Caco-2 (cell line): ENCODE measurements at regions of chr7 and their contacts with region 1.

Region 1: GRCh38 chr7:43764807-43765491 is 6.5 kb downstream of the BLVRA start:
- DNase-seq: peak in 1 of 2 experiments; percentile 68
- H3K4me3 ChIP-seq: no peak overlapping the region
- H3K4me3 Mint-ChIP-seq: peak overlapping the region; percentile 42
- H3K27ac Mint-ChIP-seq: no peak overlapping the region
- H3K4me1 ChIP-seq: peaks cover 29% of the 10 kb centered on the region
- H3K4me1 Mint-ChIP-seq: peaks cover 19% of the 10 kb centered on the region
- H3K27me3 ChIP-seq: no peaks in the 10 kb centered on the region
- H3K27me3 Mint-ChIP-seq: no peaks in the 10 kb centered on the region
- CTCF ChIP-seq: no peak

Region 2: DNA sequence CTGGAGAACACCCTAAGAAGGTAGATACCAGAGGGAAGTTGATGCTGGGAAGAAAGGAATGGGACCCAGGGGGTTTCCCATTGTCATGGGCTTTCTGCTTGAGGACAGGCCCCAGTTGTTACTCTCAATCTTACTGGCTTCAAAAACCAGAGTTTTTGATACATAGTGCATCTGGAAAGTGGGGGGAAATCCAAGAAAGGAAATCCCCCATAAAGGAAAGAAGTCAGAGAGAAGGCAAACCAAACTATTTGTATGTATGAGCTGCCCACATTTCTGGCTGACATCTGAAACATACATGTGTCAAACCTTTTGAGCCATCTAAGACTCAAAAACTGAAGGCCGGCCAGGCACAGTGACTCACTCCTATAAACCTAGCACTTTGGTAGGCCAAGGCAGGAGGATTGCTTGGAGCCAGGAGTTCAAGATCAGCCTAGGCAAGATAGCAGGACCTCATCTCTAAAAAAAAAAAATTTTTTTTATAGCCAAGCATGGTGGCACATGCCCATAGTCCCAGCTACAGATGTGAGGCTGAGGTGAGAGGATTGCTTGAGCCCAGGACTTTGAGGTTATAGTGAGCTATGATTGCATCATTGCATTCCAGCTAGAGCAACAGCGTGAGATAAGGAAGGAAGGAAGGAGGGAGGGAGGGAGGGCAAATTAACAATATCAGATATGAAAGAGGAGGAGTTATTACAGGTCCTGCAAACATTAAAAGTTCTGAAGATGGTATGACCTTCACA is 29.0 kb before region 1 on chr7:
- CTCF ChIA-PET with region 1: no interaction called
- POLR2A ChIA-PET with region 1: no interaction called
- intact Hi-C with region 1: no loop called
- DNase-seq: peak in 1 of 2 experiments; percentile 47
- H3K4me3 ChIP-seq: no peak overlapping the region
- H3K4me3 Mint-ChIP-seq: no peak overlapping the region
- H3K27ac Mint-ChIP-seq: peak overlapping the region; percentile 81
- H3K4me1 ChIP-seq: peaks cover 13% of the 10 kb centered on the region
- H3K4me1 Mint-ChIP-seq: peaks cover 11% of the 10 kb centered on the region
- H3K27me3 ChIP-seq: no peaks in the 10 kb centered on the region
- H3K27me3 Mint-ChIP-seq: no peaks in the 10 kb centered on the region
- CTCF ChIP-seq: no peak

Region 3: GRCh38 chr7:43815373-43815772 is 50.4 kb after region 1 on chr7:
- CTCF ChIA-PET with region 1: no interaction called
- POLR2A ChIA-PET with region 1: no interaction called
- intact Hi-C with region 1: loop called (anchors 5 kb)
- DNase-seq: no peak
- H3K4me3 ChIP-seq: no peak overlapping the region
- H3K4me3 Mint-ChIP-seq: no peak overlapping the region
- H3K27ac Mint-ChIP-seq: no peak overlapping the region
- H3K4me1 ChIP-seq: peaks cover 5% of the 10 kb centered on the region; the same call in 1 of the 2 replicates
- H3K4me1 Mint-ChIP-seq: peaks cover 6% of the 10 kb centered on the region
- H3K27me3 ChIP-seq: no peaks in the 10 kb centered on the region
- H3K27me3 Mint-ChIP-seq: peaks cover 7% of the 10 kb centered on the region
- CTCF ChIP-seq: no peak